Activated naive CD4-positive, alpha-beta T cell treated with anti-CD3 and anti-CD28 coated beads for 36 hours (primary cell): ENCODE measurements at regions of chr1 and their contacts with region 1.

Region 1: DNA sequence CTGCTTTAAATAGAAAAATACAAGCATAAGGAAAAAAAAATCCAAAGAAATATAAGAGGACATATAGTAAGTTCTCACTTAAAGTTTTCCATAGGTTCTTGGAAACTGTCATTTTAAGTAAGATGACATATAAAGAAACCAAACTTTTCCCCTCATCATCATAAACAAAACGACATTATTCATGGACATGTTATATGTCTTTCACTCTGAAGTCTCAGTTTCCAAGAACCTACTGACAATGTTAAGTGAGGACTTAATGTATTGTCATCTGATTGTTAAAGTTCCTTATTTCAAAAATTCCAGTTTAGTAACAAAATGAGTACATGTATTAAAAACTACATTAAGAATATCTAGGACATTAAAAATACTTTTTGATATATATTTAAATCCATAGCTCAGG is 69.6 kb upstream of the GFI1 start:
- DNase-seq: no peak
- H3K4me3 Mint-ChIP-seq: no peak overlapping the region
- H3K27ac Mint-ChIP-seq: peak overlapping the region; percentile 81
- H3K4me1 Mint-ChIP-seq: peaks cover 54% of the 10 kb centered on the region
- H3K27me3 Mint-ChIP-seq: no peaks in the 10 kb centered on the region

Region 2: DNA sequence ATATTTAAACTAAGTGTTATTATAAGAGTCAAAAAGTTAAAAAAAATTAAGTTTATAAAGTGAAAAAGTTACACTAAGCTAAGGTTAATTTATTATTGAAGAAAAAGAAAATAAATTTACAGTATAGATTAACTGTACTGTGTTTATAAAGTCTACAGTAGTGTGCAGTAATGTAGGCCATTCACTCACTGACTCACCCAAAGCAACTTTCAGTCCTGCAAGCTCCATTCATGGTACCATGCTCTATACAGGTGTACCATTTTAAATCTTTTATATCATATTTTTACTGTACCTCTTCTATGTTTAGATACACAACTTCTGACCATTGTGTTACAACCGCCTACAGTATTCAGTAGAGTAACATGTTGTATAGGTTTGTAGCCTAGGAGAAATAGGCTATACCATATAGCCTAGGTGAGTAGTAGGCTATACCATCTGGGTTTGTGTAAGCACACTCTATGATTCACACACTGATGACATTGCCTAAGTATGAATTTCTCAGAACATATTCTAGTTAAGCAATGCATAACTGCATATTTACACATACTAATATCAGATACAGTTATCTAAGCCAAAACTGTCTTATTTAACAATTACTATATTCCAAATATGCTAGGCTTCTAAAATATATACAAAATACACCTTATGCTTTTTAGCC is 11.0 kb after region 1 on chr1:
- CTCF ChIA-PET with region 1: interaction called, 4 read pairs
- intact Hi-C with region 1: loop called (anchors 1 kb)
- DNase-seq: no peak
- H3K4me3 Mint-ChIP-seq: no peak overlapping the region
- H3K27ac Mint-ChIP-seq: no peak overlapping the region
- H3K4me1 Mint-ChIP-seq: peaks cover 44% of the 10 kb centered on the region
- H3K27me3 Mint-ChIP-seq: no peaks in the 10 kb centered on the region

Region 3: DNA sequence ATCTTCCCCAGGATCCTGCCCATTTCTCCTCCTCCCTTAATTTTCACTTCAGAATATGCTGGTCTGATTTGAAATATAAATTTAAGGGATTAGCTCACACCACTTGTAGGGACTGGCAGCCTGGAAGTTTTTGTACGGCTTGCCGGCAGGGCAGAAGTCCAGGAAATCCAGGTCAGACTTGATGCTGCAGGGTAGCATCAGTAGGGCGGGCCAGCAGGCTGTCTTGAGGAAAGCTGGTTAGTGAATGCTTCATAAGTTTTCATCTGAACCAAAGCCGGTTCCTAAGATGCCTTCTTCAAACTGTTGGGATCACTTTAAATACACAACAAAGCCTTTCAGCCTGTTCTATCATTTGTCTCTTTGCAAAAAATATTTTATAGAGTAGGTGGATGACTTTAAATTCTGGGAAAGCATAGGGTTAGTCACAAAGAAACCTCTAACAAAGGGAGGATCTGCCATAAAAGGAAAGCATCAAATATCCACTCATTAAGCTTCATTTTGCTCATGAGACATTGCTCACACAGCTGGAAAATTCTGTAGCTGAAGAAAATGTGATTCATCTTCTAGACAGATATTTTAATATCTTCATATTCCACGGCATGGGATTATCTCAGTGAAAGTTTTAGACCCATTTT is 21.0 kb after region 1 on chr1:
- CTCF ChIA-PET with region 1: interaction called, 4 read pairs
- intact Hi-C with region 1: loop called (anchors 2 kb)
- DNase-seq: no peak
- H3K4me3 Mint-ChIP-seq: peak overlapping the region; percentile 92
- H3K27ac Mint-ChIP-seq: peak overlapping the region; percentile 97
- H3K4me1 Mint-ChIP-seq: peaks cover 62% of the 10 kb centered on the region
- H3K27me3 Mint-ChIP-seq: no peaks in the 10 kb centered on the region